Activated T-helper 1 cell treated with anti-CD3 and anti-CD28 coated beads, Interleukin-12 subunit alpha, Interleukin-12 subunit beta, Interleukin-2, Interleukin-4 antibody, amounts not matched to agents 30 ng/mL and 10 ng/mL and 1 ng/mL, durations not matched to agents 14 hours and 24 hours and 36 hours (primary cell): ENCODE measurements at regions of chr2 and their contacts with region 1.

Region 1: GRCh38 chr2:210020138-210020537 is 17.7 kb downstream of the RPE start:
- DNase-seq: no peak
- H3K4me3 Mint-ChIP-seq: no peak overlapping the region
- H3K27ac Mint-ChIP-seq: no peak overlapping the region
- H3K4me1 Mint-ChIP-seq: no peaks in the 10 kb centered on the region
- H3K27me3 Mint-ChIP-seq: no peaks in the 10 kb centered on the region

Region 2: GRCh38 chr2:210034087-210034683 is 14.0 kb after region 1 on chr2:
- intact Hi-C with region 1: loop called (anchors 1 kb)
- DNase-seq: no peak
- H3K4me3 Mint-ChIP-seq: no peak overlapping the region
- H3K27ac Mint-ChIP-seq: no peak overlapping the region
- H3K4me1 Mint-ChIP-seq: no peaks in the 10 kb centered on the region
- H3K27me3 Mint-ChIP-seq: no peaks in the 10 kb centered on the region

Region 3: GRCh38 chr2:210099940-210100339 is 79.8 kb after region 1 on chr2:
- intact Hi-C with region 1: no loop called
- DNase-seq: no peak
- H3K4me3 Mint-ChIP-seq: no peak overlapping the region
- H3K27ac Mint-ChIP-seq: no peak overlapping the region
- H3K4me1 Mint-ChIP-seq: no peaks in the 10 kb centered on the region
- H3K27me3 Mint-ChIP-seq: no peaks in the 10 kb centered on the region